GM12878 (cell line): ENCODE measurements at regions of chr6 and their contacts with region 1.

Region 1: GRCh38 chr6:33711140-33712129 is at the start of gene UQCC2:
- DNase-seq: peak; percentile 84
- ATAC-seq: peak; percentile 97
- H3K4me3 ChIP-seq: peak within 1 kb of the TSS; percentile 83
- H3K27ac ChIP-seq: peak within 1 kb of the TSS; percentile 98
- H3K4me1 ChIP-seq: peaks cover 28% of the 10 kb centered on the region
- H3K27me3 ChIP-seq: no peaks in the 10 kb centered on the region
- CTCF ChIP-seq: peak; percentile 66 to 87 (median 68)
- EP300 ChIP-seq: no peak
- POLR2A ChIP-seq: peak; percentile 93
- RAD21 ChIP-seq: peak; percentile 64
- polyA plus RNA-seq, gene UQCC2: 433 to 478 TPM

Region 2: GRCh38 chr6:33147807-33148666 is 563.4 kb before region 1 on chr6:
- CTCF ChIA-PET with region 1: no interaction called
- POLR2A ChIA-PET with region 1: no interaction called
- RAD21 ChIA-PET with region 1: no interaction called
- SMC1A ChIA-PET with region 1: no interaction called
- in situ Hi-C with region 1: no loop called
- intact Hi-C with region 1: no loop called
- DNase-seq: no peak
- ATAC-seq: no peak
- H3K4me3 ChIP-seq: no peak overlapping the region
- H3K27ac ChIP-seq: no peak overlapping the region
- H3K4me1 ChIP-seq: peaks cover 3% of the 10 kb centered on the region; the same call in 1 of the 2 replicates
- H3K27me3 ChIP-seq: peaks cover 0 to 2% of the 10 kb centered on the region in 2 experiments; a peak in 2 of 4 replicates
- CTCF ChIP-seq: peak; percentile 69 to 82 (median 81)
- EP300 ChIP-seq: no peak
- POLR2A ChIP-seq: no peak
- RAD21 ChIP-seq: peak; percentile 93

Region 3: DNA sequence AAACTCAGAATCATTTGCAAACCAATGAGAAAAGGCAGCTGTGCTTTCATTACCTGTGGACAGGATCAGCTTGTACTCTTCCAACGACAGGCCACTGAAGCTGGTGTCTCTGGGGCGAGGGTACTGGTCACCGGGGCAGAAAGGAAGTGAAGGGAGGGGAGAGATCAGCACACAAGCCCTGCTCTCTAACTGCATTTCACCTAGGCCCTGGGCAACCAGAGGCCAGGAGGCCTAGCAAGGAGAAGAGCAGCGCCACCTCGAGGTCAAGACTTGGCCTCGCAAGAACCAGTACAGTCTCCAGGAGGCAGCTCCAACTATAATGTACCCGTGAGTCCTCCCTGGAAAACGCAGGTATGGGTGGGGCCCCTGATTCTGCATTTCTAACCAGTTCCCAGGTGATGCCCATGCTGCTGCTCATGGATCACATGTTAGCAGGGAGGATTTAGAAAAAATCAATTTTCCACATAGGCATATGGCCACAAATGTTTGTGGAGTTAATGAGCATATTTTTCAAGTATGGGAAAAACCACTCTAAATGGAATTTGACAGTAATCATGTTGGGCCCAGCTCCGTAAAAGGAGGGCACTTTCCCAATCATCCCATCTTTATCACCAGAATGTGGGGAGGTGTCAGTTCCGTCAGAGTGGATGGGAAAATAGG is 10.9 kb before region 1 on chr6:
- CTCF ChIA-PET with region 1: interaction called, 34 read pairs
- POLR2A ChIA-PET with region 1: interaction called, 6 read pairs
- RAD21 ChIA-PET with region 1: interaction called, 7 read pairs
- SMC1A ChIA-PET with region 1: interaction called, 27 read pairs
- in situ Hi-C with region 1: no loop called
- intact Hi-C with region 1: no loop called
- DNase-seq: no peak
- ATAC-seq: peak; percentile 94
- H3K4me3 ChIP-seq: no peak overlapping the region
- H3K27ac ChIP-seq: peak overlapping the region; percentile 24
- H3K4me1 ChIP-seq: peaks cover 20% of the 10 kb centered on the region
- H3K27me3 ChIP-seq: no peaks in the 10 kb centered on the region
- CTCF ChIP-seq: peak; percentile 85 to 89 (median 88)
- EP300 ChIP-seq: no peak
- POLR2A ChIP-seq: no peak
- RAD21 ChIP-seq: peak; percentile 75

Region 4: GRCh38 chr6:33723371-33724085 is 12.1 kb after region 1 on chr6:
- CTCF ChIA-PET with region 1: interaction called, 16 read pairs
- POLR2A ChIA-PET with region 1: interaction called, 3 read pairs
- RAD21 ChIA-PET with region 1: interaction called, 3 read pairs
- SMC1A ChIA-PET with region 1: interaction called, 4 read pairs
- in situ Hi-C with region 1: no loop called
- intact Hi-C with region 1: no loop called
- DNase-seq: no peak
- ATAC-seq: no peak
- H3K4me3 ChIP-seq: no peak overlapping the region
- H3K27ac ChIP-seq: no peak overlapping the region
- H3K4me1 ChIP-seq: peaks cover 12% of the 10 kb centered on the region
- H3K27me3 ChIP-seq: peaks cover 6 to 11% of the 10 kb centered on the region in 2 experiments; a peak in 2 of 4 replicates
- CTCF ChIP-seq: no peak
- EP300 ChIP-seq: no peak
- POLR2A ChIP-seq: no peak
- RAD21 ChIP-seq: no peak